Gastrocnemius medialis (tissue), 4 donors: ENCODE measurements at regions of chr6 and their contacts with region 1.

Region 1: GRCh38 chr6:35516642-35517041 is 3.9 kb upstream of the TULP1 start:
- DNase-seq: no peak
- ATAC-seq: no peak
- H3K4me3 ChIP-seq: no peak overlapping the region
- H3K27ac ChIP-seq: no peak overlapping the region
- H3K4me1 ChIP-seq: peaks cover 0 to 5% of the 10 kb centered on the region in 2 donors
- H3K27me3 ChIP-seq: peaks cover under 1 to 6% (median 6%) of the 10 kb centered on the region in 3 donors
- CTCF ChIP-seq: no peak
- POLR2A ChIP-seq: no peak

Region 2: DNA sequence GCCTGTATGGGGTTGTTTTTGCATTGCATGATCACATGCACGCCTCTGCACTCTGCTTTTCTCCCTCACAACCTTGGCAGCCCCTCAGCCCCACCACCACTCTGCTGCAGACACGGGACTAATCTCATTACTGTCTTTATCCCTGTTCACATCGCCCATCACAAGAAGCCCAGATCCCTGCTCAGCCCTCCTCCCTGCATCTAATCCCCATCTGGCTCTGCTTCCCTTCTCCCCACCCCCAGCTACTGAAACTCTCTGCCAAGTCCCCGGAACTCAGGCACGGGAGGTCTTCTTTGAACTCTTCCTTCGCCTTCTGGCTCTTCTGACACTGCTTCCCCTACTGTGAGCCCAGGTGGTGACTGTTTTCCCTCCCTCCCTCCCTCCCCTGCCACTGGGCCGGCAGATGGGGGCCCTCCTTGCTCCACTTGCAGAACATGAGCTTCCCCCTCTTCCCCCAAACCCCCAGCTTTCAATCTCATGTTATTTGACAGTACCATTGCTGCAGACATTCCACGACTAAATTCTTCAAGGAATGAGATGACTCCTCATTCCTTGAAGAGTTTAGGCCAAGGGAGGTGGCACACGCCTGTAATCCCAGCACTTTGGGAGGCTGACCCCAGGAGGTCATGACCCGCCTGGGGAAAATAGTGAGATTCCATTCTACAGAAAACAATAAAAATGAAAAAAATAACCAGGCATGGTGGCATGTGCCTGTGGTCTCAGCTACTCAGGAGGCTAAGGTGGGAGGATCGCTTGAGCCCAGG is 17.9 kb after region 1 on chr6:
- in situ Hi-C with region 1: no loop called
- intact Hi-C with region 1: loop called (anchors 1 kb)
- DNase-seq: no peak
- ATAC-seq: no peak
- H3K4me3 ChIP-seq: no peak overlapping the region
- H3K27ac ChIP-seq: no peak overlapping the region
- H3K4me1 ChIP-seq: no peaks in the 10 kb centered on the region
- H3K27me3 ChIP-seq: no peaks in the 10 kb centered on the region
- CTCF ChIP-seq: no peak
- POLR2A ChIP-seq: no peak